ENCODE measurements at regions of chr7 and their contacts with region 1.

Region 1: GRCh38 chr7:64665980-64666662 is at the start of gene ZNF107:
- DNase-seq: peak; percentile 86 to 92 (median 88)
- H3K4me3 ChIP-seq: peak within 1 kb of the TSS; percentile 85 to 90
- H3K4me3 Mint-ChIP-seq: peak within 1 kb of the TSS; percentile 97 to 98 (median 97)
- H3K27ac ChIP-seq: peak within 1 kb of the TSS; percentile 92
- H3K27ac Mint-ChIP-seq: peak within 1 kb of the TSS; percentile 97 to 99 (median 98)
- H3K4me1 ChIP-seq: peaks cover 38% of the 10 kb centered on the region
- H3K4me1 Mint-ChIP-seq: peaks cover 42 to 80% (median 59%) of the 10 kb centered on the region in 4 donors
- H3K27me3 ChIP-seq: no peaks in the 10 kb centered on the region
- H3K27me3 Mint-ChIP-seq: no peaks in the 10 kb centered on the region
- total RNA-seq, gene ZNF107: 30.2 to 30.9 TPM

Region 2: DNA sequence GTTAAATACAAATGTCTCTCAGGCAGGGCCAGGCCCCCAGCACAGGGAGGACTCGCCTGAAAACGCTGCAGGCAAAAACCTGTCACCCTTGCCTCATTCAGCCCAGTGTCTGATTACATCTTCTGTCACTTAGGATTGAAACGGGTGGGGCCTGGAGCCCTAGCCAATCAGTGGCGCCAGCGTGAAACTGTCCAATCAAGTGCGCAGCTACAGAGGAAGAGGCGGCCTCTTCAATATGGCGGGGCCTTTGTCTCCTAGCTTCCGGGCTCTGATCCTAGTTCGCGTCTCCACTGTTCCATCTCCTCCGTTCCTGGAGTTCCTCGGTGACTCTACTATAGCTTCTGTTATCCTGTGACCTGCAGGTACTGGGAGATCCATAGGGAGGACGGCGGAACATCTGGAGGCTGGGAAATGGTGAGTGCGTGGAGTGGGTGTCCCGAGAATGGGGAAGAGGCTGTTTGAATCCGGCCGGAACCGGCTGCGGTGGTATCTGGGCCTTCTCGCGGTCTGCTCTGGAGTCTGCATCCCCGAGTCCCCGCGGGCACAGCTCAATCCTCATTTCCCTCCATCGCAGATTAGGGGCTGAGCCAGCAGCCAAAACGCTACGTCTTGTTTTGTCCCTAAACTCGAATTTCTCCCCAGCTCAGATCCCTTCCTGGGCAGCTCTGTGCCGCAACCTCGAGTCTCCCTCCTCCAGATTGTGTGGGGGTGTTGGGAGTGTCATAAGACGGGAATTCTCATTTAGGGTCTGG is 352.2 kb before region 1 on chr7 and contains the start of gene ZNF736:
- CTCF ChIA-PET with region 1: no interaction called
- POLR2A ChIA-PET with region 1: interaction called, 17 read pairs
- intact Hi-C with region 1: loop called (anchors 1 kb)
- DNase-seq: peak; percentile 87 to 93 (median 89)
- H3K4me3 ChIP-seq: peak within 1 kb of the TSS; percentile 88 to 97
- H3K4me3 Mint-ChIP-seq: peak within 1 kb of the TSS; percentile 98 to 99 (median 99)
- H3K27ac ChIP-seq: peak within 1 kb of the TSS; percentile 59
- H3K27ac Mint-ChIP-seq: peak within 1 kb of the TSS; percentile 96 to 99 (median 98)
- H3K4me1 ChIP-seq: peaks cover 27% of the 10 kb centered on the region
- H3K4me1 Mint-ChIP-seq: peaks cover 16 to 50% (median 36%) of the 10 kb centered on the region in 4 donors
- H3K27me3 ChIP-seq: no peaks in the 10 kb centered on the region
- H3K27me3 Mint-ChIP-seq: no peaks in the 10 kb centered on the region
- total RNA-seq, gene ZNF736: 43.6 to 48.2 TPM

Region 3: GRCh38 chr7:64562626-64563275 is 103.4 kb before region 1 on chr7 and contains the start of gene ZNF680:
- CTCF ChIA-PET with region 1: no interaction called
- POLR2A ChIA-PET with region 1: interaction called, 32 read pairs
- intact Hi-C with region 1: loop called (anchors 1 kb)
- DNase-seq: peak; percentile 89 to 93 (median 90)
- H3K4me3 ChIP-seq: peak within 1 kb of the TSS; percentile 47 to 70
- H3K4me3 Mint-ChIP-seq: peak within 1 kb of the TSS; percentile 100
- H3K27ac ChIP-seq: peak within 1 kb of the TSS; percentile 57
- H3K27ac Mint-ChIP-seq: peak within 1 kb of the TSS; percentile 97 to 99 (median 99)
- H3K4me1 ChIP-seq: peaks cover 20% of the 10 kb centered on the region
- H3K4me1 Mint-ChIP-seq: peaks cover 21 to 46% (median 36%) of the 10 kb centered on the region in 4 donors
- H3K27me3 ChIP-seq: no peaks in the 10 kb centered on the region
- H3K27me3 Mint-ChIP-seq: no peaks in the 10 kb centered on the region
- total RNA-seq, gene ZNF680: 17.7 to 19.6 TPM

Region 4: DNA sequence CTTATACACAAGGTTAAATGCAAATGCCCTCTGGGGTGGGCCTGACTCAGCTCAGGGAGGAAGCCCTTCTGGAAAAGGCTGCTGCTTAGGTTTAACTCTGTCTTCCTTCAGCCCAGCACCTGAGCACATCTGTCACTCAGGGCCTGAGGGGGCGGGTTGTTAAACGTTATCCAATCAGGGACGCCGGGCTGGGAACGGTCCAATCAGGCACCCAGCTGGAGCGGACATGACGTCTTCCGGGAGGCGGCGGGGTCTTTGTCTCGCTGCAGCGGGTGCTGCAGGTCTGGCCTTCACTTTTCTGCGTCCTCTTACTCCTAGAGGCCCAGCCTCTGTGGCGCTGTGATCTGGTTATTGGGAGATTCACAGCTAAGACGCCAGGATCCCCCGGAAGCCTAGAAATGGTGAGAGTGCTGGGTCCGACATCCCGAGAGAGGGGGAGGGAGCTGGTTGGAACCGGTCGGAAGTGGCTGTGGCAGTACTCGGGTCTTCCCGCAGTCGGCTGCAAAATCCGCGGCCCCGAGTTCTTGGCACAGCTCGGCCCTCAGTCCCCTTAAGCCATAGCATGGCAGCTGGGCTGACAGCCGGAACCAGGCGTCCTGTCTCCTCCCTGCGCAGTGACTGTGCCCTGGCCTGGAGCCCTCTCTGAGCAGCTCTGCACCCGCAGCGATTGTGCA is 128.2 kb after region 1 on chr7 and contains the start of gene ZNF138:
- CTCF ChIA-PET with region 1: no interaction called
- POLR2A ChIA-PET with region 1: interaction called, 30 read pairs
- intact Hi-C with region 1: loop called (anchors 1 kb)
- DNase-seq: peak; percentile 92 to 95 (median 93)
- H3K4me3 ChIP-seq: peak within 1 kb of the TSS; percentile 87 to 95
- H3K4me3 Mint-ChIP-seq: peak within 1 kb of the TSS; percentile 97 to 99 (median 99)
- H3K27ac ChIP-seq: peak within 1 kb of the TSS; percentile 75
- H3K27ac Mint-ChIP-seq: peak within 1 kb of the TSS; percentile 97 to 99 (median 98)
- H3K4me1 ChIP-seq: peaks cover 27% of the 10 kb centered on the region
- H3K4me1 Mint-ChIP-seq: peaks cover 18 to 47% (median 30%) of the 10 kb centered on the region in 4 donors
- H3K27me3 ChIP-seq: no peaks in the 10 kb centered on the region
- H3K27me3 Mint-ChIP-seq: no peaks in the 10 kb centered on the region
- total RNA-seq, gene ZNF138: 12.1 to 14.3 TPM

Region 5: DNA sequence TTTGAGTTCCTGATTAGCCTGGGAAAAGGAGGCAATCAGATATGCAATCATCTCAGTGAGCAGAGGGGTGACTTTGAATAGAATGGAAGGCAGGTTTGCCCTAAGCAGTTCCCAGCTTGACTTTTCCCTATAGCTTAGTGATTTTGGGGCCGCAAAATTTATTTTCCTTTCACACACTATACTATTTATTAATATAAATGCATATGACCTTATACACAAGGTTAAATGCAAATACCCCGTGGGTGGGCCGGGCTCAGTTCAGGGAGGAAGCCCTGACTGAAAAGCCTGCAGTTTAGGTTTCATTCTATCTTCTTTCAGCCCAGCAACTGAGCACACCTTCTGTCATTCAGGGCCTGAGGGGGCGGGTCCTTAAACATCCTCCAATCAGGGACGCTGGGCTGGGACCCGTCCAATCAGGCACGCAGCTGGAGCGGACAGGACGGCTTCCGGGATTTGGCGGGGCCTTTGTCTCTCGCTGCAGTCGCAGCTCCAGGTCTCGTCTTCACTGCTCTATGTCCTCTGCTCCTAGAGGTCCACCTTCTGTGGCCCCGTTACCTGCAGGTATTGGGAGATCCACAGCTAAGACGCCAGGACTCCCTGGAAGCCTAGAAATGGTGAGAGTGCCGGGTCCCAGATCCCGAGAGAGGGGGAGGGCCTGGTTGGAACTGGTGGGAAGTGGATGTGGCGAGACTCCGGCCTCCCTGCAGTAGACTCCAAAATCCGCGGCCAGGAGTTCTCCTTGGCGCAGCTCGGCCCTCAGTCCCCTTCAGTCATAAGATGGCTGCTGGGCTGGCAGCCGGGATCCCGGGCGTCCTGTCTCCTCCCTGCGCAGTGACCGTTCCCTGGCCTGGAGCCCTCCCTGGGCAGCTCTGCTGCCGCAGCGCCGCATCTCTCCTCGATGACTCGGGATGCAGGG is 236.9 kb after region 1 on chr7 and contains the start of gene ZNF273:
- CTCF ChIA-PET with region 1: no interaction called
- POLR2A ChIA-PET with region 1: interaction called, 6 read pairs
- intact Hi-C with region 1: loop called (anchors 1 kb)
- DNase-seq: peak; percentile 89 to 95 (median 90)
- H3K4me3 ChIP-seq: peak within 1 kb of the TSS; percentile 67 to 71
- H3K4me3 Mint-ChIP-seq: peak within 1 kb of the TSS; percentile 96 to 98 (median 98)
- H3K27ac ChIP-seq: peak within 1 kb of the TSS; percentile 79
- H3K27ac Mint-ChIP-seq: peak within 1 kb of the TSS; percentile 92 to 97 (median 96)
- H3K4me1 ChIP-seq: peaks cover 43% of the 10 kb centered on the region
- H3K4me1 Mint-ChIP-seq: peaks cover 32 to 53% (median 39%) of the 10 kb centered on the region in 4 donors
- H3K27me3 ChIP-seq: no peaks in the 10 kb centered on the region
- H3K27me3 Mint-ChIP-seq: no peaks in the 10 kb centered on the region
- total RNA-seq, gene ZNF273: 8.3 to 8.9 TPM

Region 6: GRCh38 chr7:66075590-66076461 is 1409.7 kb after region 1 on chr7 and contains the start of gene ASL:
- CTCF ChIA-PET with region 1: no interaction called
- POLR2A ChIA-PET with region 1: no interaction called
- intact Hi-C with region 1: loop called (anchors 5 kb)
- DNase-seq: peak; percentile 80 to 83 (median 80)
- H3K4me3 ChIP-seq: peak within 1 kb of the TSS; percentile 63 to 76
- H3K4me3 Mint-ChIP-seq: peak within 1 kb of the TSS; percentile 83 to 93 (median 87)
- H3K27ac ChIP-seq: peak within 1 kb of the TSS; percentile 69
- H3K27ac Mint-ChIP-seq: peak within 1 kb of the TSS; percentile 59 to 90 (median 86)
- H3K4me1 ChIP-seq: peaks cover 12% of the 10 kb centered on the region
- H3K4me1 Mint-ChIP-seq: peaks cover 9 to 17% (median 14%) of the 10 kb centered on the region in 4 donors
- H3K27me3 ChIP-seq: no peaks in the 10 kb centered on the region
- H3K27me3 Mint-ChIP-seq: no peaks in the 10 kb centered on the region
- total RNA-seq, gene ASL: 11.8 to 13.7 TPM